Esophagus squamous epithelium (tissue), 5 donors: ENCODE measurements at regions of chr2 and their contacts with region 1.

Region 1: DNA sequence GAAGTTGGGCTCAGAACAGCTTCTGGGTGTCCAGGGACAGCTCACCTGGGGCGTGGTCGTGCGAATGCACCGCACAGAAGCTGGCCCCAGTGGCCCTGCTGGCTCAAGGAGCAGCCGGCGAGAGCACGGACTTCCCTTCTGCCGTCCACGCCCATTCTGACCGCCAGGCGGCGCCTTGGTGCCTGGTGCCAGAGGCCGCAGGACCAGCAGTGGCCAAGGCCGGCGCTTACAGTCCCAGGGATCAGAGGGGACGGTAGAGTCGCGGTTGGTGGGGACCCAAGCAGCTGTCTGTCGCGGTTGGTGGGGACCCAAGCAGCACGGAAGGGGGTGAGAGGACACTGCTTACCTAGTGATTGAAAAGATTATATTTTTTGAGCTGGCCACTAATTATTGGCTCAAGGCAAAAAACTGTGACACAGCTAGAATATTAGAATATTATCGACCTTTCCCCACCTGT is 25.7 kb downstream of the NPPC start:
- DNase-seq: no peak
- H3K4me3 ChIP-seq: no peak overlapping the region
- H3K27ac ChIP-seq: no peak overlapping the region
- H3K4me1 ChIP-seq: peaks cover 0 to 11% (median 0%) of the 10 kb centered on the region in 3 donors
- H3K27me3 ChIP-seq: peaks cover 0 to 17% (median 0%) of the 10 kb centered on the region in 4 donors
- CTCF ChIP-seq: peak; percentile 17 to 77 (median 56)
- POLR2A ChIP-seq: no peak

Region 2: DNA sequence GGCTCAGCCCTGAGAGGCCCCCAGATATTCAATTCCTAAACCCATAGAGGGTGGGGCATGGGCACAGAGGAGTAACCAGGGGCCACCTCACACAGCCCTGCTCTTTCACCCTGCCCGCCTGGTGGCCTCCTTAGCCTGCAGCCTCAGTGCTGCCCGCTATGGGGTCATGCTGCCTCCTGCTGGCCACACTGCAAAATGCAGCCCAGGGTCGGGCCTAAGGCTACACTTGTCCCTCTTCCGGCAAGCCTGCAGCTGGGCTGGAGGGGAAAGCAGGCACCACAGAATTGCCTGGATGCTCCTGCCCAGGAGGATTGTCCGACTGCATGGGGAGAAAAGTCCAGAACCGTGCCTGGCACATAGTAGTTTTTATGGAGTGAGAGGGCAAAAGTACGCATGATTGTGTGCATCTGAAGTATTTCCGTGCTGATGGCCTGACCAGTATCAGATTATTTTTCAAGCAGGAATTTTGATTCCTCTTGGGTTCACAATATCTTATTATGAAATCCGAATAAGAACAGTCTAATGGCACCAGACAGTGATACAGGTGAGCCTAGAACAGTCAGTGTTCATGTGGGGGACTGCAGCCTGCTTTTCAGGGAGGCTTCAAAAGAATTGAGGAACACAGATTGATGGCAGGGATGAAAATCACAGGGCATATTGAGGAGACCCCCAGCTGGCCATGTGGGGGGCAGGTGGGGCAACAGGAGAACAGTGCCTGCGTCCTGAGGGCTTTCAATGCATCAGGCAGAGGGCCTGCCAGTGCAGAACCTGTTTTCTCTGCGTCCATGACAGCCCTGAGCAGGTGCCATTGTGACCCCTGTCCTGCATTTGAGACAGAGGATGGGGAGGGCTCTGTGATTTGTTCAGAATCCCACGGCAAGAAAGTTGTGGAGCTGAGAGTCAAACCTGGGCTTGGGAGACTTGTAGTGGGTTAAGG is 426.9 kb after region 1 on chr2:
- intact Hi-C with region 1: loop called (anchors 5 kb)
- DNase-seq: no peak
- H3K4me3 ChIP-seq: no peak overlapping the region
- H3K27ac ChIP-seq: no peak overlapping the region
- H3K4me1 ChIP-seq: peaks cover 15 to 30% (median 15%) of the 10 kb centered on the region in 3 donors
- H3K27me3 ChIP-seq: no peaks in the 10 kb centered on the region
- CTCF ChIP-seq: peak; percentile 75 to 98 (median 94)
- POLR2A ChIP-seq: no peak

Region 3: GRCh38 chr2:232438951-232439757 is 538.6 kb after region 1 on chr2:
- intact Hi-C with region 1: loop called (anchors 10 kb)
- DNase-seq: no peak
- H3K4me3 ChIP-seq: no peak overlapping the region
- H3K27ac ChIP-seq: no peak overlapping the region
- H3K4me1 ChIP-seq: peaks cover 0 to 5% (median 0%) of the 10 kb centered on the region in 3 donors
- H3K27me3 ChIP-seq: peaks cover 0 to 19% (median 0%) of the 10 kb centered on the region in 4 donors
- CTCF ChIP-seq: peak; percentile 14 to 56 (median 40)
- POLR2A ChIP-seq: no peak